ENCODE measurements at regions of chr20 and their contacts with region 1.

Region 1: DNA sequence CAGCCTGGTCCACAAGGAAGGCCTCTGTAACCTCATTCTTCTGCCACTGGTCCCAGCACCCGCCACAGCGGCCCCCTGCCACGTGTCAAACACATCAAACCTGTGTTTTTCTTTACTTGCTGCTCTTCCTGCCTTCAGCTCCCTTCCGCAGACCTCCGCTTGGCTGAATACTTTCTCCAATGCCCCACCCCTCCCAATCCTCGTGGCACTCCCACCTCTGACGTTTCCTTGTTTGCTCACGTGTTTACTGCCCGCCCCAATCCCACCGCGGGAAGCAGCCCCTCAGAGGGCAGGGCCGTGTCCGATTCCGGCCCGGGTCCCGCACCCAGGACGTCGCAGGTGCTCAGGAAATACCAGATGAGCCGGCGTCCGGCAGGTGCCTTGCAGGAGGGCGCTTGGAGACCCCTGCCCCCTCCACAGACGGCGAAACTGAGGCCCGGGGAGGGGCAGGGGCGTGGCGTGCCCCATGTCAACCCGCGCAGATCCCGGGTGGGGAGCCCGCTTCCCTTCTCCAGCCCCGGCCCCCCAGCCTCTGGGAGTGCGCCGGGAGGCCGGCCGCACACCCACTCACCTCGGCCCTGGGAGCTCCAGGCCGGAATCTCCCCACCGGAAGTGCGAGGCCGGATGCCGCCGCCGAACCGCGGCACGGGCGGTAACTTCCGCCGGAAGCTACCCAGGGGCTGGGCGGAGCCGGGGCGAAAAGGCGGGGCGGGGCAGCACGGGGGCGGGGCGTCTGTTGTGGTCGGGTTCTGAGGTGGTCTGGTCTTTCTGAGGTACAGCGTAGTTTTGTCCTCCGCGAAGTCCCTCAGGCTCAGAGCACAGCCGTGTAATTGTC is 42.4 kb downstream of the ELMO2 start:
- DNase-seq: peak; percentile 89
- H3K4me3 ChIP-seq: peak overlapping the region; percentile 90
- H3K27ac ChIP-seq: peak overlapping the region; percentile 95
- H3K4me1 ChIP-seq: peaks cover 3% of the 10 kb centered on the region
- H3K27me3 ChIP-seq: no peaks in the 10 kb centered on the region
- CTCF ChIP-seq: no peak

Region 2: GRCh38 chr20:45867819-45868176 is 496.2 kb before region 1 on chr20:
- CTCF ChIA-PET with region 1: no interaction called
- POLR2A ChIA-PET with region 1: no interaction called
- intact Hi-C with region 1: no loop called
- DNase-seq: no peak
- H3K4me3 ChIP-seq: no peak overlapping the region
- H3K27ac ChIP-seq: no peak overlapping the region
- H3K4me1 ChIP-seq: no peaks in the 10 kb centered on the region
- H3K27me3 ChIP-seq: no peaks in the 10 kb centered on the region
- CTCF ChIP-seq: no peak

Region 3: DNA sequence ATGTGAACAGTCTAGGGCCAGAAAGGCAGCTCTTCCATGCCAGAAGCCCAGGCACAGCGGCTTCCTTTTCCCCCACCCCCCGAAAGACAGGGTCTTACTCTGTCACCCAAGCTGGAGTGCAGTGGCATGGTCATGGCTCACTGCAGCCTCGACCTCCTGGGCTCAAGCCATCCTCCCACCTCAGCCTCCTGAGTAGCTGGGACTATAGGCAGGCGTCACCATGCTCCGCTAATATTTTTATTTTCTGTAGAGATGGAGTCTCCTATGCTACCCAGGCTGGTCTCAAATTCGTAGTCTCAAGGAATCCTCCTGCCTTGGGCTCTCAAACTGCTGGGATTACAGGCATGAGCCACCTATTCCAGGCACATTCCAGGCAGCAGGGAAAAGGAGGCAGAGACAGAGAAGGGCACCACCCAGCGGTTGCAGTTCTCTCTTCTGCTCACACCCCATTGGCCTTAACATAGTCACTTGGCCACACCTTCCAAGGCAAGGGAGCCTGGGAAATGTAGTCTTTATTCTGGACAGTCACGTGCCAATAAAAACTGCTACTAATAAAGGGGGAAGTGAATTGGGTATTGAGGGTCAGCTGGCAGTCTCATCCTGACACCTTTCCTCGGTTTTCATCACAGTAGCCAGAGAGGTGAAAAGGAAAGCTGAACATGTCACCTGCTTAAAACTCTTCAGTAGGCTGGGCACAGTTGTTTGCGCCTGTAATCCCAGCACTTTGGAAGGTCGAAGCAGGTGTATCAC is 786.6 kb after region 1 on chr20:
- CTCF ChIA-PET with region 1: no interaction called
- POLR2A ChIA-PET with region 1: interaction called, 14 read pairs
- intact Hi-C with region 1: no loop called
- DNase-seq: peak; percentile 85
- H3K4me3 ChIP-seq: no peak overlapping the region
- H3K27ac ChIP-seq: no peak overlapping the region
- H3K4me1 ChIP-seq: no peaks in the 10 kb centered on the region
- H3K27me3 ChIP-seq: no peaks in the 10 kb centered on the region
- CTCF ChIP-seq: peak; percentile 82

Measured in A673 (cell line).